ENCODE measurements at regions of chr15 and their contacts with region 1.

Region 1: GRCh38 chr15:50686468-50687301 is at the start of gene TRPM7:
- DNase-seq: peak; percentile 95
- ATAC-seq: peak; percentile 79
- H3K4me3 Mint-ChIP-seq: peak within 1 kb of the TSS; percentile 99
- H3K27ac Mint-ChIP-seq: peak within 1 kb of the TSS; percentile 97
- H3K4me1 Mint-ChIP-seq: peaks cover 49% of the 10 kb centered on the region
- H3K27me3 Mint-ChIP-seq: no peaks in the 10 kb centered on the region
- total RNA-seq, gene TRPM7: 40.7 to 41.4 TPM

Region 2: DNA sequence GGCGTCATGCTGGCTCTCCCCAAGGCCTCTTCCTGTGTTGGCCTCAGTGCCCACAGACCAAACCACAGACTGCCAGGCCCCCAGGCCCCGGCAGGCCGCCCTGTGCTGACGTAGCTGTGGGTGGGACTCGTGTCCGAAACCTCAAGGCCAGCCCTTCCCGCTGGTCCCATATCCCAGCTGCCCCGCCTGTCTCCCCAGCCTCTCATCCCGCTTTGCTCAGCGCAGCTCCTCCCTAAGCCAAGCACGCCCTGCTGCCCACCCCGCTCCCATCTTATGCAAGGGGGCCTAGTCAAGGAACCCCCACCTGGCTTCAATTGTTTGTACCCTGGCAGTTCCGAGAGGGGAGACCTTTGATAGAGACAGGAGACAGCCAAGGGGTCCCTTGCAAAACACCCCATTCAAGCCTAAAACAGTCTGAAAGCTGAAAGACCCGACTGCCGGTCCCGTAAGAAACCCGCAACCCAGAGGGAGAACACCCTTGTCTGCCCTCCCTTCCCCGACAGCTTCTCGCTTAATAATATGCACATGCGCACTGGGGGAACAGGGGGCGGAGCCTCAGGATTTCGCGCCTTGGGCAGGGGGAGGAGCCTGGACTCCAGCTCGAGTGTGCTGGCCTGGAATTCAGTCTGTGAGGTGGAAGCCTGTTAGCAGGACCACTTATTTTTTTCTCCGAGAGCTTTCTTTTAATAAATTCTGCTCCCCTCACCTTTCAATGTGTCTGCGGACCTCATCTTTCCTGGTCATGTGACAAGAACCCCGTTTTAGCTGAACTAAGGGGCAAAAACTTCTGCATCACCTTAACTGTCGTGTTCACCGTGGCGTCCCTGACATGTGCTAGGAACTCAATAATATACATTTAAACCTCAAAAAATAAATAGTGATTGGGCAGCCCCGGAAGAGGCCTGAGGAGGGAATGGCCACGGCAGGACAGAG is 390.8 kb after region 1 on chr15:
- CTCF ChIA-PET with region 1: no interaction called
- POLR2A ChIA-PET with region 1: no interaction called
- intact Hi-C with region 1: loop called in 1 of 2 experiments (anchors 2 kb)
- DNase-seq: peak; percentile 88
- ATAC-seq: peak; percentile 94
- H3K4me3 Mint-ChIP-seq: peak overlapping the region; percentile 48
- H3K27ac Mint-ChIP-seq: peak overlapping the region; percentile 65
- H3K4me1 Mint-ChIP-seq: peaks cover 19% of the 10 kb centered on the region
- H3K27me3 Mint-ChIP-seq: peaks cover 8% of the 10 kb centered on the region

Region 3: GRCh38 chr15:51312166-51313097 is 625.7 kb after region 1 on chr15:
- CTCF ChIA-PET with region 1: no interaction called
- POLR2A ChIA-PET with region 1: no interaction called
- intact Hi-C with region 1: no loop called
- DNase-seq: no peak
- ATAC-seq: no peak
- H3K4me3 Mint-ChIP-seq: no peak overlapping the region
- H3K27ac Mint-ChIP-seq: no peak overlapping the region
- H3K4me1 Mint-ChIP-seq: no peaks in the 10 kb centered on the region
- H3K27me3 Mint-ChIP-seq: no peaks in the 10 kb centered on the region

Measured in activated CD4-positive, alpha-beta T cell treated with anti-CD3 and anti-CD28 coated beads for 36 hours (primary cell).